Head of caudate nucleus (tissue), 42 donors: ENCODE measurements at regions of chr9 and their contacts with region 1.

Region 1: DNA sequence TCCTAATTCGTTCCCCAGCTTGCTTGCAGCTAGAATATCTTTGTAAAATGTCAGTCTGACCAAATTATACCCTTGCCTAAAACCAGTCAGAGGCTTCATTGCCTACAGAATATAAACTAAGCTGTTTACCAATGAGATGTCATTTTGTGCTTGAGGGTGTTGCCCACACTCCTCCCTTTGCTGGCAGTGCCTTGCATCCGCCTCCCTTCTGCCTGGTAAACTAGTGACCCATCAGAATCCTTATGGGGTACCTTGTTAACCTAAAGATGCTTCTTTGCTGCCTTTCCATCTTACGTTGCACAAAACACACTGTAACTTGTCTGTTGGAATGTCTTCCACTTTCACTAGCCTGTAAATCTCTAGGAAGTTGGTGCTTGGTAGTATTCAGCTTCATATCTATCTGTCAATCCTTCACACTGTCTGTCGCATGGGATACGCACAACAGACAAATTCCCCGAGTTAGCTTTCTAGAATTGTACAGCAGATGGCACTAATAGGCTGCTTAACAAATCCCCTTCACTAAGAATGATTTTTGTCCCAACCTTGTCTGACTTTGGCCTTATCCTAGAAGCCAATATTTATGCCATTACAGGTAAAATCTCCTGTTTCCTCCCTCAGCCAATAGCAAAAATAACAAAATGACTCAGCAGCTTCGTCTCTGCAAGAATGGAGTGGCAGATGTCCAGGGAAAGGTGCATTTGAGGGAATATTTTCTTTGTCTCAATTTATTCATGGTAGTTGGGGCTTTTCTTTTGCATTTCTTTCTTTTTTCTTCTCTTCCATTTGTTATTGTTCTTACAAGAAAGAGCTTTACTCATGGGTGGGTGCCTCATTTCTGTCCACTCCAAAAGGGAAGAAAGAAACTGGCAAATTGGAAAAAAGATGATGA is 3.0 kb downstream of the NUDT2 start:
- DNase-seq: peak in 17 of 42 donors; percentile 32 to 80 (median 50)

Region 2: GRCh38 chr9:34379334-34380033 is 47.2 kb after region 1 on chr9:
- intact Hi-C with region 1: loop called (anchors 1 kb)
- DNase-seq: peak; percentile 75 to 96 (median 92)

Region 3: GRCh38 chr9:34675048-34675714 is 342.9 kb after region 1 on chr9:
- intact Hi-C with region 1: no loop called
- DNase-seq: peak in 34 of 42 donors; percentile 18 to 76 (median 53)